Activated B cell treated with CpG ODN at 0.5 μM for 24 hours (primary cell): ENCODE measurements at regions of chr4 and their contacts with region 1.

Region 1: GRCh38 chr4:119628308-119629141 is at the start of gene PDE5A:
- DNase-seq: peak; percentile 69
- ATAC-seq: peak; percentile 84
- H3K4me3 Mint-ChIP-seq: peak within 1 kb of the TSS; percentile 85
- H3K27ac Mint-ChIP-seq: peak within 1 kb of the TSS; percentile 51
- H3K4me1 Mint-ChIP-seq: peaks cover 25% of the 10 kb centered on the region
- H3K27me3 Mint-ChIP-seq: peaks cover 12% of the 10 kb centered on the region
- CTCF ChIP-seq: peak; percentile 26
- total RNA-seq, gene PDE5A: 0.47 and 0.66 TPM in 2 replicates

Region 2: DNA sequence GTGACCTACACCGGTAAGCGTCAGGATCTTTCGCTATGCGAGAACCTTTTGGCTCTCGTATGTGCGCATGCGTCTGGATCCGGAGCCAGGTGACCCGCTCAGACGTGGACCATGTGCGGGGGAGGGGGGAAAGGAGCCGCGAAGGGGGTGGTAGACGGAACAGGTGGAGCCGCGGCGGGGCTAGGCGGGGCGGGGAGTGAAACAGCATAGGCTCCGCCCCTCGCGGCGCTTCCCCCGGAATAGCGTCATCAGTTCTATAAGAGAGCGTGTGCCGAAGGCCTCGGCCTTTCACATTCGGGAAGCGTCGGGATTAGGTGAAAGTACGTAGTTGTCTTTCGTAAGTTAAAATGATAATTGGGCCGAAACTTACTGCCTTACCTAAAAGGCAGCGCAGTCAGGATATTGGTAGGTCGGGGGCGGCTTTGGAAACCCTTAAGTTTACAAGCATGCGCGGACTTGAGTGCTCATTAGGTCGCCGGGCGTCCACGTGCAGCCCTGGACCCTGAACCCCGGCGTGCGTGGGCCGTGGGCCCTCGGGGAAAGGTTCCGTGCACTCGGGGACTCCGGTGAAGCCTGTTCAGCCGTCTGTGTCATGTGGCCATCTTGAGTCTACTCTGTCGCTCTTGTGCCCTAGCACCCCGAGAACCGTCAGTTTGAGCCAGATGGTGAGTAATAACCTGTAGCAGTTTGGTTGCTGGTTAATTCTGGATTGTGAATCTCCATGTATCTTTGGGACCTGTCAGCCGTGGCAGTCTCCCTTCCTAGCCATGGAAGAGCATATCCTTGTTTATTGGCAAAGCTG is 1349.9 kb before region 1 on chr4:
- CTCF ChIA-PET with region 1: no interaction called
- POLR2A ChIA-PET with region 1: no interaction called
- intact Hi-C with region 1: loop called (anchors 2 kb)
- DNase-seq: peak; percentile 90
- ATAC-seq: peak; percentile 98
- H3K4me3 Mint-ChIP-seq: peak overlapping the region; percentile 94
- H3K27ac Mint-ChIP-seq: peak overlapping the region; percentile 97
- H3K4me1 Mint-ChIP-seq: peaks cover 61% of the 10 kb centered on the region
- H3K27me3 Mint-ChIP-seq: no peaks in the 10 kb centered on the region
- CTCF ChIP-seq: no peak

Region 3: GRCh38 chr4:118981839-118982381 is 646.6 kb before region 1 on chr4:
- CTCF ChIA-PET with region 1: no interaction called
- POLR2A ChIA-PET with region 1: no interaction called
- intact Hi-C with region 1: loop called (anchors 1 kb)
- DNase-seq: no peak
- ATAC-seq: peak; percentile 57
- H3K4me3 Mint-ChIP-seq: no peak overlapping the region
- H3K27ac Mint-ChIP-seq: no peak overlapping the region
- H3K4me1 Mint-ChIP-seq: no peaks in the 10 kb centered on the region
- H3K27me3 Mint-ChIP-seq: peaks cover 4% of the 10 kb centered on the region
- CTCF ChIP-seq: no peak

Region 4: DNA sequence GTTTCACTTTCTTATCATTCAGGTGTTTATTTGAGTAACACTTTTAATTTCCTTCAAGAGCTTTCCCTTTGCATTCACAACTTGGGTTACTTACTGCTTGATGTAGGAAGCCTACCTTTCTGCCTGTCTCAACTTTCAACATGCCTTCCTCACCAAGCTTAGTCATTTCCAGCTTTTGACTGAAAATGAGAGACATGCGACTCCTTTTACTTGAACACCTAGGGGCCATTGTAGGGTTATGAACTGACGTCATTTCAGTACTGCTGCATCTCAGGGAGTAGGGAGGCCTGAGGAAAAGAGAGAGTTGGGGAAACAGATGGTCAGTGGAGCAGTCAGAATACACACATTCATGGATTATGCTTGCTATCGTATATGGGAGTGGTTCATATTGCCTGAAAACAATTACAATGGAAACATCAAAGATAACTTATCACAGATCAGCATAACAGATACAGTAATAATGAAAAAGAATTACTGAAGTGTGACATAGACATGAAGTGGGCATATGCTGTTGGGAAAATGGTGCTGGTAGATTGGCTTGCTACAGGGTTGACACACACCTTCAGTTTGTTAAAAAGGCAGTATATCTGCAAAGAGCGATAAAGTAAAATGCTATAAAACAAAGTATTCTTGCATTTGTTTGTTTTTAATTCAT is 390.3 kb before region 1 on chr4:
- CTCF ChIA-PET with region 1: no interaction called
- POLR2A ChIA-PET with region 1: no interaction called
- intact Hi-C with region 1: no loop called
- DNase-seq: no peak
- ATAC-seq: peak; percentile 66
- H3K4me3 Mint-ChIP-seq: no peak overlapping the region
- H3K27ac Mint-ChIP-seq: peak overlapping the region; percentile 38
- H3K4me1 Mint-ChIP-seq: peaks cover 24% of the 10 kb centered on the region
- H3K27me3 Mint-ChIP-seq: no peaks in the 10 kb centered on the region
- CTCF ChIP-seq: no peak

Region 5: GRCh38 chr4:119314356-119314755 is 314.2 kb before region 1 on chr4:
- CTCF ChIA-PET with region 1: interaction called, 4 read pairs
- POLR2A ChIA-PET with region 1: no interaction called
- intact Hi-C with region 1: loop called (anchors 1 kb)
- DNase-seq: no peak
- ATAC-seq: peak; percentile 57
- H3K4me3 Mint-ChIP-seq: no peak overlapping the region
- H3K27ac Mint-ChIP-seq: no peak overlapping the region
- H3K4me1 Mint-ChIP-seq: no peaks in the 10 kb centered on the region
- H3K27me3 Mint-ChIP-seq: peaks cover 8% of the 10 kb centered on the region
- CTCF ChIP-seq: no peak

Region 6: DNA sequence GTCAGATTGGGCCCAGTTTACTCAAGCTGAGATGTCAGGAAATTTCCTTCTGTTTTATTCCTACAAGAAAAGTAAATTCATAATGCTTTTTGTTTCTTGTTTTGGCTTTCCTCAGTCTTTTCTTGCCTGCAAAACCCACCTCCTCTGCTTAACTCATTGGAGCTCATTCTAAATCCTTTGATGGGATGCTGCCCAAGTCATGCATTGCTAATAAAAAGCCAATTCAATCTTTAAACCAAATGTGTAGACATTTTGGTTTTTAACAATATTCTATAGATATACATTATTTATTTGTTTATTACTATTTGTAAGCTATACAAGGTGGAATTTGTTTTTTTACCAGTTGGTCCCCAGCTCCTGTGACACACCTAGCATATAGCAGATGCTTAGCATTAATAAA is 13.2 kb after region 1 on chr4:
- CTCF ChIA-PET with region 1: interaction called, 11 read pairs
- POLR2A ChIA-PET with region 1: no interaction called
- intact Hi-C with region 1: no loop called
- DNase-seq: no peak
- ATAC-seq: no peak
- H3K4me3 Mint-ChIP-seq: no peak overlapping the region
- H3K27ac Mint-ChIP-seq: no peak overlapping the region
- H3K4me1 Mint-ChIP-seq: no peaks in the 10 kb centered on the region
- H3K27me3 Mint-ChIP-seq: peaks cover 8% of the 10 kb centered on the region
- CTCF ChIP-seq: no peak